CD8-positive, alpha-beta T cell (primary cell): ENCODE measurements at regions of chr20 and their contacts with region 1.

Region 1: GRCh38 chr20:63223221-63224207 is 7.6 kb upstream of the YTHDF1 start:
- DNase-seq: peak in 7 of 9 experiments; percentile 17 to 67 (median 54)
- ATAC-seq: peak; percentile 73
- H3K4me3 ChIP-seq: no peak overlapping the region
- H3K4me3 Mint-ChIP-seq: no peak overlapping the region
- H3K27ac ChIP-seq: no peak overlapping the region
- H3K27ac Mint-ChIP-seq: no peak overlapping the region
- H3K4me1 ChIP-seq: no peaks in the 10 kb centered on the region
- H3K4me1 Mint-ChIP-seq: no peaks in the 10 kb centered on the region
- H3K27me3 ChIP-seq: peaks cover 0 to 2% of the 10 kb centered on the region in 2 experiments
- H3K27me3 Mint-ChIP-seq: peaks cover 2% of the 10 kb centered on the region
- CTCF ChIP-seq: peak; percentile 85

Region 2: DNA sequence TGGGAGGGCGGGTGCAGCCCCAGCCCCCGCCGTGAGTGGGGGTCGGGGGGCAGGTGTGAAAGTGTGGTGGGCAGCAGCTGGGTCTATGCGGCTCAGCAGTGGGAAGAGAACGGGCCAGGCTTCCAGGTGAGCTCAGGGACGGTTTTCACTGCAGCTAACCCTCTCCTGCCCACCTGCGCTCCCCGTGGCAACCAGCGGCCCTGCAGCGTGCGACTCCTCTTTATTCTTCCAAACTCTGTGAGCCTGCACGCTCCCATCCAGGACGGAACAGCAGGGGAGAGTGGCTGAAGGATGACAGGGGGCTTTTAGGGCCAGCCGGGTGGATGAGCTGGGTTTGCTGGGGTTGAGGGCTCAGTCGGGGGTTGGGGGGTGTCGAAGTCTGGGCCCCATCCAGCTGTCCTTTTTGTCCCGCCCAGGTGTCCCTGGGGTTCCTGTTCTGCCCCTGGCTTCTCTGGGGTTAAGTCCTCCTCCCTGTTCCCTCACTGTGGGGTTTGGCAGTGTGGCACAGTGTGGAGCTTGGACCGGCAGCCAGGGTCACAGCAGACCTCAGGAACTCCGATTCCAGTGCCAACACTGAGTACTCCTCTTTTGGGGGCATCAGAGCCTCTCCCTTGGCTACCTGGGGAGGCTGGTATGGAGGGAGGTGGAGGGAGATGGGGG is 11.4 kb after region 1 on chr20:
- CTCF ChIA-PET with region 1: interaction called, 85 read pairs
- POLR2A ChIA-PET with region 1: interaction called, 5 read pairs
- intact Hi-C with region 1: no loop called
- DNase-seq: peak in 4 of 9 experiments; percentile 31 to 49 (median 40)
- ATAC-seq: peak; percentile 59
- H3K4me3 ChIP-seq: no peak overlapping the region
- H3K4me3 Mint-ChIP-seq: no peak overlapping the region
- H3K27ac ChIP-seq: no peak overlapping the region
- H3K27ac Mint-ChIP-seq: no peak overlapping the region
- H3K4me1 ChIP-seq: peaks cover 13% of the 10 kb centered on the region
- H3K4me1 Mint-ChIP-seq: peaks cover 15% of the 10 kb centered on the region
- H3K27me3 ChIP-seq: peaks cover 0 to 6% of the 10 kb centered on the region in 2 experiments
- H3K27me3 Mint-ChIP-seq: peaks cover 22% of the 10 kb centered on the region
- CTCF ChIP-seq: peak; percentile 47

Region 3: DNA sequence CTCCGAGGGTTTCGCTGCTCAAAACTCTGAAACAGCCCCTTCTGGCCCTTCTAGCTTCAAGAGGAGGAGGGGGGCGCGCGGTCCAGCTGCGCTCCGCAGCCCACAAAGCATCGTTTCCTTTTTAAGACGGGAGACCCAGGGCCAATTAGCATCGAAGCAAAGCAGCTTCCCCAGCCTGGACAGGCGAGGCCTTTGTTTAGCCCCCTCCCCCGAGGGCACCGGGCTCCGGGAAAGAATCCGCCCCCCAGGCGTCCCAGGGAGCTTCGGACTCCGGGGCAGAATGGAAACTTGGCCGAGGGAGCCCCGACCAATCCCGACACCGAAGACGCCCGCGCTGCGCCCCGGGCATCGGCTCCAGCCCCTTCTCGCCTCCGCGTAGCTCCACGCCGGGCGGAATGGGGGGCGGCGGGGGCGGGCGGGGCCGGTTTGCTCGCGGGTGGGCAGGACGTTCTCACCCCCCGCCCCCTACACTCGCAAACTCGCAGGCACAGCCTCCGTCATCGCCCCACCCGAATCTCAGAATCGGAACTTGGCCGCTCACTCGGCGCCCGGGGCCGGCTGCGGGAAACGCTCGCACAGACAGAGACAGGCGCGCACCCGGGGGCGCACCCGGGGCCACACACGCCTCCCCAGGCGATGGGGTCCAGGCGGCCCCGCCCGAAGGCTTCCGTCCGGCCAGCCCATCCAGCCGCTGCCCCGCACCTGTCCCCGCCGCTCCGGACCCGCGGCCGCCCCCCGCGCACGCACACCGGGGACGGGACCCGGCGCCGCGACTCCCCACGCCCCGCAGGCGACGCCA is 30.1 kb after region 1 on chr20:
- CTCF ChIA-PET with region 1: interaction called, 25 read pairs
- POLR2A ChIA-PET with region 1: no interaction called
- intact Hi-C with region 1: no loop called
- DNase-seq: peak in 1 of 9 experiments; percentile 25
- ATAC-seq: no peak
- H3K4me3 ChIP-seq: no peak overlapping the region
- H3K4me3 Mint-ChIP-seq: no peak overlapping the region
- H3K27ac ChIP-seq: no peak overlapping the region
- H3K27ac Mint-ChIP-seq: no peak overlapping the region
- H3K4me1 ChIP-seq: peaks cover 6% of the 10 kb centered on the region
- H3K4me1 Mint-ChIP-seq: peaks cover 10% of the 10 kb centered on the region
- H3K27me3 ChIP-seq: peaks cover 11 to 18% of the 10 kb centered on the region in 2 experiments
- H3K27me3 Mint-ChIP-seq: peaks cover 50% of the 10 kb centered on the region
- CTCF ChIP-seq: no peak

Region 4: GRCh38 chr20:63290677-63291472 is 67.4 kb after region 1 on chr20:
- CTCF ChIA-PET with region 1: interaction called, 19 read pairs
- POLR2A ChIA-PET with region 1: no interaction called
- intact Hi-C with region 1: loop called (anchors 1 kb)
- DNase-seq: peak; percentile 36 to 73 (median 62)
- ATAC-seq: peak; percentile 80
- H3K4me3 ChIP-seq: no peak overlapping the region
- H3K4me3 Mint-ChIP-seq: no peak overlapping the region
- H3K27ac ChIP-seq: no peak overlapping the region
- H3K27ac Mint-ChIP-seq: no peak overlapping the region
- H3K4me1 ChIP-seq: peaks cover 11% of the 10 kb centered on the region
- H3K4me1 Mint-ChIP-seq: peaks cover 8% of the 10 kb centered on the region
- H3K27me3 ChIP-seq: no peaks in the 10 kb centered on the region
- H3K27me3 Mint-ChIP-seq: peaks cover 6% of the 10 kb centered on the region
- CTCF ChIP-seq: peak; percentile 76

Region 5: GRCh38 chr20:63381807-63382322 is 158.4 kb after region 1 on chr20:
- CTCF ChIA-PET with region 1: interaction called, 61 read pairs
- POLR2A ChIA-PET with region 1: no interaction called
- intact Hi-C with region 1: loop called in 1 of 2 experiments (anchors 1 kb)
- DNase-seq: peak in 7 of 9 experiments; percentile 6 to 58 (median 46)
- ATAC-seq: peak; percentile 51
- H3K4me3 ChIP-seq: no peak overlapping the region
- H3K4me3 Mint-ChIP-seq: no peak overlapping the region
- H3K27ac ChIP-seq: no peak overlapping the region
- H3K27ac Mint-ChIP-seq: no peak overlapping the region
- H3K4me1 ChIP-seq: no peaks in the 10 kb centered on the region
- H3K4me1 Mint-ChIP-seq: peaks cover 3% of the 10 kb centered on the region
- H3K27me3 ChIP-seq: no peaks in the 10 kb centered on the region
- H3K27me3 Mint-ChIP-seq: peaks cover 14% of the 10 kb centered on the region
- CTCF ChIP-seq: peak; percentile 77